Activated naive CD4-positive, alpha-beta T cell treated with anti-CD3 and anti-CD28 coated beads, Interleukin-2, amount 10 ng/mL, durations not matched to agents 7 days and 5 days (primary cell): ENCODE measurements at regions of chr1 and their contacts with region 1.

Region 1: GRCh38 chr1:113835642-113836307 is 23.5 kb upstream of the RSBN1 start:
- DNase-seq: peak; percentile 33
- H3K4me3 Mint-ChIP-seq: no peak overlapping the region
- H3K27ac Mint-ChIP-seq: no peak overlapping the region
- H3K4me1 Mint-ChIP-seq: peaks cover 6% of the 10 kb centered on the region
- H3K27me3 Mint-ChIP-seq: no peaks in the 10 kb centered on the region

Region 2: GRCh38 chr1:113811888-113812660 is 23.7 kb before region 1 on chr1 and contains the start of gene RSBN1:
- CTCF ChIA-PET with region 1: no interaction called
- DNase-seq: peak; percentile 99
- H3K4me3 Mint-ChIP-seq: peak within 1 kb of the TSS; percentile 96
- H3K27ac Mint-ChIP-seq: peak within 1 kb of the TSS; percentile 96
- H3K4me1 Mint-ChIP-seq: peaks cover 35% of the 10 kb centered on the region
- H3K27me3 Mint-ChIP-seq: peaks cover 4% of the 10 kb centered on the region

Region 3: GRCh38 chr1:113859478-113860175 is 23.9 kb after region 1 on chr1:
- CTCF ChIA-PET with region 1: interaction called, 13 read pairs
- DNase-seq: no peak
- H3K4me3 Mint-ChIP-seq: no peak overlapping the region
- H3K27ac Mint-ChIP-seq: peak overlapping the region; percentile 77
- H3K4me1 Mint-ChIP-seq: peaks cover 36% of the 10 kb centered on the region
- H3K27me3 Mint-ChIP-seq: no peaks in the 10 kb centered on the region

Region 4: GRCh38 chr1:113904674-113905434 is 69.1 kb after region 1 on chr1 and contains the starts of genes AP4B1 and DCLRE1B:
- CTCF ChIA-PET with region 1: interaction called, 32 read pairs
- DNase-seq: peak; percentile 99
- H3K4me3 Mint-ChIP-seq: peak within 1 kb of the TSS; percentile 86
- H3K27ac Mint-ChIP-seq: peak within 1 kb of the TSS; percentile 96
- H3K4me1 Mint-ChIP-seq: peaks cover 64% of the 10 kb centered on the region
- H3K27me3 Mint-ChIP-seq: no peaks in the 10 kb centered on the region

Region 5: GRCh38 chr1:113963281-113963906 is 127.6 kb after region 1 on chr1:
- CTCF ChIA-PET with region 1: interaction called, 11 read pairs
- DNase-seq: no peak
- H3K4me3 Mint-ChIP-seq: no peak overlapping the region
- H3K27ac Mint-ChIP-seq: peak overlapping the region; percentile 82
- H3K4me1 Mint-ChIP-seq: peaks cover 6% of the 10 kb centered on the region
- H3K27me3 Mint-ChIP-seq: no peaks in the 10 kb centered on the region